GM13977 (cell line): ENCODE measurements at regions of chr5 and their contacts with region 1.

Region 1: GRCh38 chr5:134041570-134042411 is 37.0 kb upstream of the VDAC1 start:
- DNase-seq: peak; percentile 70
- CTCF ChIP-seq: no peak

Region 2: DNA sequence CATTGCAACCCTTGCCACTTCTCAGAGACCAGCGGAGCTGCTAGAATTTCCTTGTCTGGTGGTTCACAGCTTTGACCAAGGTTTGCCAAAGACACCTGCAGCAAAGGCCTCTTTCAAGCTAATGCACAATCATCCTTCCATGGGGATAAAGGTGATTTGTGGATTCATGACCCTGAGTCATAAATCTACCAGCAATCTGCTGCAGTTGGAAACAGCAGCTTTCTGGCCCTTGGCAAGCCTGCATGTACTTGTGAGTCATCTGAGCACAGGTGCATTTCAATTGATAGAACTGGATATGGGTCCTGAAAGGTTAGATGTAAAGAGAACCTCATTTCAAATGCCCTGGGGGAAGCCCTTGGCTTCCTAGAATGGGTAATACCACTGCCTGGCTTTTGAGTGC is 51.1 kb after region 1 on chr5:
- in situ Hi-C with region 1: loop called (anchors 10 kb)
- DNase-seq: no peak
- CTCF ChIP-seq: no peak

Region 3: GRCh38 chr5:134149571-134150303 is 107.9 kb after region 1 on chr5:
- in situ Hi-C with region 1: loop called (anchors 5 kb)
- DNase-seq: no peak
- CTCF ChIP-seq: no peak